Mammary epithelial cell (primary cell): ENCODE measurements at regions of chr18 and their contacts with region 1.

Region 1: DNA sequence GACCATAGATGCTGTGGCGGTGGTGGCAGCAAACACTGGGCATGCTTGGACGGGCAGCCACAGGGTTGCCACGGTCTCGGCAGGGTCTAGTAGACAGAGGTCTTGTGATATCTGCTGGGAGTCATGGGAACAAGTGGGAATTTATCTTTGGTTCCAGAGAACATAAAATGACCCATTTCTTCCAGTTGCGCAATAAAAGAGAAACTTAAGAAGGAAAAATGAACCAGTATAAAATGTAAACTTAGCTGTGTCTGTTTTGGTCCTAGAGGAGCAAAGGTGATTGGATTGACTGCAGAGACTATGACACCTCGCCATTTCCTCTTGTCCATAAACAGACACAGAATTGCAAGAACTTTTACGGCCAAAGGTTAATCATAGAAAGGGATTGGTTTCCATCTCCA is 132.6 kb upstream of the RBBP8 start:
- DNase-seq: no peak
- H3K4me3 ChIP-seq: no peak overlapping the region
- H3K27ac ChIP-seq: no peak overlapping the region
- H3K4me1 ChIP-seq: peaks cover 6% of the 10 kb centered on the region
- H3K27me3 ChIP-seq: no peaks in the 10 kb centered on the region
- CTCF ChIP-seq: no peak

Region 2: DNA sequence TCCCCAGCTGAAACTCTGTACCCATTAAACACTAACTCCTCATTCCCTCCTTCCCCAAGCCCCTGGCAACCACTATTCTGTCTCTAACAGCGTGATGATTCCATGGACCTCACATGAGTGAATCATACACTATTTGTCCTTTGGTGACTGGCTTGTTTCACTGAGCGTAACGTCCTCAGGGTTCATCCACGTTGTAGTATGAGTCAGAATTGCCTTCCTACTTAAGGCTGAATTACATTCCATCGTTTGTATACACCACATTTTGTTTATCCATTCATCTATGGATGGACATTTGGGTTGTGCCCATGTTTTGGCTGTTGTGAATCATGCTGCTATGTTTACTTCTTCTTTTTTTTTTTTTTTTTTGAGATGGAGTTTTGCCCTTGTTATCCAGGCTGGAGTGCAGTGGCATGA is 315.1 kb after region 1 on chr18:
- CTCF ChIA-PET with region 1: no interaction called
- dilution Hi-C with region 1: no loop called
- in situ Hi-C with region 1: no loop called
- intact Hi-C with region 1: loop called (anchors 5 kb)
- DNase-seq: peak; percentile 94
- H3K4me3 ChIP-seq: no peak overlapping the region
- H3K27ac ChIP-seq: no peak overlapping the region
- H3K4me1 ChIP-seq: peaks cover 13% of the 10 kb centered on the region
- H3K27me3 ChIP-seq: no peaks in the 10 kb centered on the region
- CTCF ChIP-seq: no peak

Region 3: GRCh38 chr18:23416298-23416697 is 615.7 kb after region 1 on chr18:
- CTCF ChIA-PET with region 1: no interaction called
- dilution Hi-C with region 1: no loop called
- in situ Hi-C with region 1: loop called in 1 of 2 experiments (anchors 25 kb)
- intact Hi-C with region 1: loop called (anchors 2 kb)
- DNase-seq: no peak
- H3K4me3 ChIP-seq: no peak overlapping the region
- H3K27ac ChIP-seq: no peak overlapping the region
- H3K4me1 ChIP-seq: no peaks in the 10 kb centered on the region
- H3K27me3 ChIP-seq: no peaks in the 10 kb centered on the region
- CTCF ChIP-seq: no peak

Region 4: DNA sequence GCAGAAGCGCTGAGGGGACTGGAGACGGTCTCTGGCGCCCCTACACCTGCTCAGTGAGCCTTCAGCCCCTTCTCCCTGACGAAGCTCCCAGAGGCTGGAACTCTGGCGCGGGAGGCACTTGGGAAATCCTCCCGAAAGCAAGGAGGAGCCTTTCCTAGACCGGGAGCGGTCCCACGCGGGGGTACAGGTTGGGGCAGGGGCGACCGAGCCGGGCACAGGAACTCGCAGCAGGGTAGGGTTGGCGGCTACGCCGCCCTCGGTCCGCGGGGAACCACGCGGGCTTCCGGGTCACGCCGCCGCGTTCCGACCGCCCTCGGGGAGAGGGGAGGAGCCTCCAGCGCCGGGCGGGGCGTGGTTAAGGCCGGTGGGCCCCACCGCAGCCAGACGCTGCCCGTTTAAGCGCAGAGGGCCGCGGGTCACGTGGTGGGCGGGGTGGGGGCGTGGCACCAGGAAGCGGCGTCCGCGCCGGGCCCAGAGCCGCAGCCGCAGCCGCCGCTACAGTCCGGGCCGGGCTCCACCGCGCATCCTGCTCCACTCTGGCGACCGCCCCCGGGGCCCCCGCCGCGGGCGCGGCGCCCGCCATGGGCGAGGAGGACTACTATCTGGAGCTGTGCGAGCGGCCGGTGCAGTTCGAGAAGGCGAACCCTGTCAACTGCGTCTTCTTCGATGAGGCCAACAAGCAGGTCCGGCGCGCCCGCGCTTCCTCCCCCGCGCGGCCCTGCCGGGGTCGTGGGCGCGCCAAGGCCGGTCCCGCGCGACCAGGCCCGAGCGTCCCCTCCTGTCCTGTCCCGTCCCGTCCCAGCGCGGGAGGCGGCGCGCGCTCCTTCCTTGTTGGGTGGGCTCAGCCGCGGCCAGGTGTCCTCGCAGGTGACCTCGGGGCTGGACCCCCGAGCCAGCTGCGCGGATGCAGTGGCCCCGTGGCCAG is 702.7 kb after region 1 on chr18 and contains the start of gene RMC1:
- CTCF ChIA-PET with region 1: no interaction called
- dilution Hi-C with region 1: no loop called
- in situ Hi-C with region 1: no loop called
- intact Hi-C with region 1: loop called (anchors 2 kb)
- DNase-seq: peak; percentile 90
- H3K4me3 ChIP-seq: peak within 1 kb of the TSS; percentile 75 to 87 (median 83)
- H3K27ac ChIP-seq: peak within 1 kb of the TSS; percentile 67
- H3K4me1 ChIP-seq: peaks cover 15% of the 10 kb centered on the region
- H3K27me3 ChIP-seq: no peaks in the 10 kb centered on the region
- CTCF ChIP-seq: peak in 1 of 2 donors; percentile 21
- total RNA-seq, gene RMC1: 29.8 to 33.3 TPM